Dorsolateral prefrontal cortex (tissue), 120 donors: ENCODE measurements at regions of chr22 and their contacts with region 1.

Region 1: GRCh38 chr22:42856865-42857704 is at the start of gene ARFGAP3:
- DNase-seq: peak; percentile 83 to 97 (median 94)
- H3K4me3 ChIP-seq: peak within 1 kb of the TSS; percentile 68 to 96 (median 86)
- H3K27ac ChIP-seq: peak within 1 kb of the TSS; percentile 62 to 96 (median 89)
- H3K27me3 ChIP-seq: no peaks in the 10 kb centered on the region
- CTCF ChIP-seq: peak in 21 of 56 donors; percentile 4 to 48 (median 22)
- total RNA-seq, gene ARFGAP3: 18.5 to 37.7 (median 25.9) TPM

Region 2: GRCh38 chr22:42528258-42528948 is 328.7 kb before region 1 on chr22:
- intact Hi-C with region 1: no loop called
- DNase-seq: peak in 1 of 10 donors; percentile 62
- H3K4me3 ChIP-seq: no peak overlapping the region
- H3K27ac ChIP-seq: no peak overlapping the region
- H3K27me3 ChIP-seq: no peaks in the 10 kb centered on the region
- CTCF ChIP-seq: no peak

Region 3: GRCh38 chr22:42933481-42934091 is 76.5 kb after region 1 on chr22:
- intact Hi-C with region 1: no loop called
- DNase-seq: no peak
- H3K4me3 ChIP-seq: peak overlapping the region in 9 of 59 donors; percentile 2 to 36 (median 10)
- H3K27ac ChIP-seq: peak overlapping the region in 58 of 59 donors; percentile 32 to 97 (median 89)
- H3K27me3 ChIP-seq: no peaks in the 10 kb centered on the region
- CTCF ChIP-seq: no peak

Region 4: GRCh38 chr22:43014869-43015676 is 158.0 kb after region 1 on chr22 and contains the start of gene PACSIN2:
- intact Hi-C with region 1: loop called (anchors 2 kb)
- DNase-seq: peak; percentile 99 to 100 (median 99)
- H3K4me3 ChIP-seq: peak within 1 kb of the TSS; percentile 41 to 93 (median 75)
- H3K27ac ChIP-seq: peak within 1 kb of the TSS in 28 of 59 donors; percentile 3 to 82 (median 56)
- H3K27me3 ChIP-seq: no peaks in the 10 kb centered on the region
- CTCF ChIP-seq: peak in 14 of 56 donors; percentile 7 to 38 (median 18)
- total RNA-seq, gene PACSIN2: 32.7 to 64.6 (median 48.1) TPM

Region 5: GRCh38 chr22:43088979-43089717 is 232.1 kb after region 1 on chr22 and contains the start of gene TTLL1:
- intact Hi-C with region 1: loop called in 1 of 2 experiments (anchors 2 kb)
- DNase-seq: peak; percentile 75 to 95 (median 86)
- H3K4me3 ChIP-seq: peak within 1 kb of the TSS; percentile 62 to 97 (median 88)
- H3K27ac ChIP-seq: peak within 1 kb of the TSS in 30 of 59 donors; percentile 3 to 85 (median 50)
- H3K27me3 ChIP-seq: no peaks in the 10 kb centered on the region
- CTCF ChIP-seq: peak in 40 of 56 donors; percentile 3 to 51 (median 30)
- total RNA-seq, gene TTLL1: 11.0 to 24.3 (median 16.5) TPM

Region 6: DNA sequence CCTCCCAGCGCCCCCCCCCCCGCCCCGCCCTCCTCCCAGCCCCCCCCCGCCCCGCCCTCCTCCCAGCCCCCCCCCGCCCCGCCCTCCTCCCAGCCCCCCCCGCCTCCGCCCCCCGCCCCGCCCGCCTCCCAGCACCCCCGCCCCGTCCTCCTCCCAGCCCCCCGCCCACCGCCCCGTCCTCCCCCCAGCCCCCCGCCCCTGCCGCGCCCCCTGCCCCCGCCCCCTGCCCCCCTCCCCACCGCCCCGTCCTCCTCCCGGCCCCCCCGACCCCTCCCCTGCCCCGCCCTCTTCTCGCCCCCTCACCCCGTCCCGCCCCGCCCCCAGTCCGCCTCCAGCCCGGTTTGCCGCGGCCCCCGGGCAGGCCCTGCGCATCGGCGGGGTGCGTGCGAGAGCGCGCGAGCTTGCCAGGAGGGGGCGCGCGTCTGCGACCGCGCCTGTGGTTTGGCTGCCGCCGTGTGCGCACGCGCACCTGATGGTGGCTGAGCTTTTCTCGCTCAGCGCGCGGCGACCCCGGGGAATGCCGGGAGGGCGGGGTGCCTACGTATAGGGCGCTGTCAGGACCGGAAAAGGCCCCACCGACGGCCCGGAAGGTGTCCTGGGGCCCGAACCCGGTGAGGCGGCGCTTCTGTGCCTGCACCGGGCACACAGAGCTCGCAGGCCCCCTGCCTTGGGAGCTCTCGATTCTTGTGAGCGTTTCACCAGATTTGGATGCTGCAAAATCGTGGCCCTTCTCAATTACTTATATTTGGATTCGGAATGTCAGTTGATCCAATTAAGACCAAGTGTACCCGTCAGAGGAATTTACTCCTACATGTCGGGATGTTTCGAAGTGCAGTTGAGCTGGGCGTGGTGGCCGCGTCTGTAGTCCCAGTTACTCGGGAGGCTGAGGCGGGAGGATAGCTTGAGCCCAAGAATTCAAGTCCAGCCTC is 330.4 kb after region 1 on chr22:
- intact Hi-C with region 1: loop called in 1 of 2 experiments (anchors 5 kb)
- DNase-seq: peak; percentile 90 to 96 (median 93)
- H3K4me3 ChIP-seq: peak overlapping the region; percentile 42 to 89 (median 69)
- H3K27ac ChIP-seq: peak overlapping the region; percentile 42 to 96 (median 89)
- H3K27me3 ChIP-seq: no peaks in the 10 kb centered on the region
- CTCF ChIP-seq: peak; percentile 43 to 85 (median 70)

Region 7: GRCh38 chr22:43293655-43294392 is 436.7 kb after region 1 on chr22:
- intact Hi-C with region 1: no loop called
- DNase-seq: peak in 1 of 10 donors; percentile 28
- H3K4me3 ChIP-seq: no peak overlapping the region
- H3K27ac ChIP-seq: peak overlapping the region in 3 of 59 donors; percentile 34 to 64 (median 53)
- H3K27me3 ChIP-seq: peaks cover 0 to 4% (median 0%) of the 10 kb centered on the region in 45 donors
- CTCF ChIP-seq: no peak